A549 (cell line): ENCODE measurements at regions of chr5 and their contacts with region 1.

Region 1: GRCh38 chr5:76582230-76583162 is 40.7 kb downstream of the F2RL2 start:
- DNase-seq: no peak
- ATAC-seq: no peak
- H3K4me3 ChIP-seq: no peak overlapping the region
- H3K27ac ChIP-seq: no peak overlapping the region
- H3K4me1 ChIP-seq: no peaks in the 10 kb centered on the region
- CTCF ChIP-seq: no peak
- EP300 ChIP-seq: no peak
- POLR2A ChIP-seq: no peak
- RAD21 ChIP-seq: no peak

Region 2: DNA sequence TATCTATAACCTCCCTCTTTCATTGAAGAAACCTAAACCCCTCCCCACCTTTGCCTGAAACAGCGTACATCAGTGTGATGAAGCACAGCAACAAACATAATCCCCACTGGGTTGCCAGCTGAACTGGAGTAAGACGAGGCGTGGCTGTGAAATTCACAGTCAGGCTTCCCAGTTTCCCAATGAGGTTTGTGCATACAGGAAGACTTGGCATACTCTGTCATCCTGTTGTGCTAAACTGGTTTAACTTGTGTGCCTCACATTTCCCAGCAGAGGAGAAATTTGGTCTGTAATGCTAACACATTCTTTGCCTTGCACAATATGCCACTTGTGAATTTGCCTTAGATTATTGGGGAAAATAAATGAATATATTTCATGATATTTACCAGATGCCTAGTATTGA is 377.8 kb before region 1 on chr5:
- CTCF ChIA-PET with region 1: no interaction called
- POLR2A ChIA-PET with region 1: no interaction called
- DNase-seq: no peak
- ATAC-seq: no peak
- H3K4me3 ChIP-seq: no peak overlapping the region
- H3K27ac ChIP-seq: no peak overlapping the region
- H3K4me1 ChIP-seq: no peaks in the 10 kb centered on the region
- CTCF ChIP-seq: no peak
- EP300 ChIP-seq: no peak
- POLR2A ChIP-seq: no peak
- RAD21 ChIP-seq: no peak

Region 3: DNA sequence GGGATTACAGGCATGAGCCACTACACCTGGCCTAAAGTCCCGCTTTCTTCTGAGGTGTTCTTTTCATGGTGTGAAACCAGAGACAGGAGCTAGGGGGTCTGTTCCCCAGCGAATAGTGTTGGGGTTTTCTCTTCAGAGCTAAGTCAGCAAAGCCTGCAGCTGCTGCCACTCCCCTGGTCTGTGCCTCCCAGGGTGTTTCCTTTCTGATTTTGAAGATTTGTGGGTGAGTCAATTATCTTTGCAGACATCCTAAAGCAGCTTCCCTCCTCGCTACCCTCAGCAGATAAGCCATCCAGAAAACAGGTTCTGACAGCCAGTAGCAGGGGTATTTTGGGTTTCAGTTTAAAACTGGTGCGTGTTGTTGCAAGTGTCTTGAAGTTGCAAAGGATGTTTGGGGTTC is 251.4 kb before region 1 on chr5:
- CTCF ChIA-PET with region 1: interaction called, 12 read pairs
- POLR2A ChIA-PET with region 1: no interaction called
- DNase-seq: no peak
- ATAC-seq: no peak
- H3K4me3 ChIP-seq: no peak overlapping the region
- H3K27ac ChIP-seq: no peak overlapping the region
- H3K4me1 ChIP-seq: no peaks in the 10 kb centered on the region
- CTCF ChIP-seq: no peak
- EP300 ChIP-seq: no peak
- POLR2A ChIP-seq: no peak
- RAD21 ChIP-seq: no peak

Region 4: DNA sequence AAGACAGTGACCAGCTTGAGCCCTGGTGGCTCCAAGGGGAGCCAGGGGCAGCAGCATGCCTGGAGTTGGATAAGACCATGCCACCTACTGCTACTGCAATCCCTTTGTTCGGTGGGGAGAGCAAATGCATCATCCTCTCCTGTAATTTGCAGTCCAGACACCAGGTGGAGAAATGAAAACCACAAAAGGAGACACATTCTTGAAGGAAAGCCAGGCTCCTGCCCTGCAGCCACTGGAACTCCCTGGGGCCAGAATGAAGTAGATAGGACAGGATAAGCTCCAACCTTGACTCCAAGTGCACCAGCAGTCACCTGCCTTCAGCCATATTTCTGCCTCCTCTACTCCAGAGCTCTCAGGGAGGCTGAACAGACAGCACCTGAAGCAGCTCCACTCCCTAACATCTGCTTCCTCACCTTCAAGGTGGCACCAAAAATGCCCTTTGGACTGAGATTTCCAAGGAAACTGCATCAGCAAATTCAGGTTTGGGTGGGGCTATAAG is 244.5 kb before region 1 on chr5:
- CTCF ChIA-PET with region 1: interaction called, 19 read pairs
- POLR2A ChIA-PET with region 1: no interaction called
- DNase-seq: peak; percentile 73 to 84
- ATAC-seq: peak; percentile 91 to 97
- H3K4me3 ChIP-seq: no peak overlapping the region
- H3K27ac ChIP-seq: 0 out of 6 replicates have a peak overlapping the region, but pooled peaks of 1 of the 2 experiments have one; percentile 30
- H3K4me1 ChIP-seq: peaks cover 4% of the 10 kb centered on the region
- CTCF ChIP-seq: peak; percentile 57
- EP300 ChIP-seq: no peak
- POLR2A ChIP-seq: no peak
- RAD21 ChIP-seq: peak; percentile 58 to 61